OCI-LY7 (cell line): ENCODE measurements at regions of chr11 and their contacts with region 1.

Region 1: GRCh38 chr11:14566331-14567063 is 46.3 kb upstream of the PSMA1 start:
- DNase-seq: no peak
- H3K4me3 ChIP-seq: no peak overlapping the region
- H3K27ac ChIP-seq: no peak overlapping the region
- H3K4me1 ChIP-seq: no peaks in the 10 kb centered on the region
- CTCF ChIP-seq: no peak

Region 2: DNA sequence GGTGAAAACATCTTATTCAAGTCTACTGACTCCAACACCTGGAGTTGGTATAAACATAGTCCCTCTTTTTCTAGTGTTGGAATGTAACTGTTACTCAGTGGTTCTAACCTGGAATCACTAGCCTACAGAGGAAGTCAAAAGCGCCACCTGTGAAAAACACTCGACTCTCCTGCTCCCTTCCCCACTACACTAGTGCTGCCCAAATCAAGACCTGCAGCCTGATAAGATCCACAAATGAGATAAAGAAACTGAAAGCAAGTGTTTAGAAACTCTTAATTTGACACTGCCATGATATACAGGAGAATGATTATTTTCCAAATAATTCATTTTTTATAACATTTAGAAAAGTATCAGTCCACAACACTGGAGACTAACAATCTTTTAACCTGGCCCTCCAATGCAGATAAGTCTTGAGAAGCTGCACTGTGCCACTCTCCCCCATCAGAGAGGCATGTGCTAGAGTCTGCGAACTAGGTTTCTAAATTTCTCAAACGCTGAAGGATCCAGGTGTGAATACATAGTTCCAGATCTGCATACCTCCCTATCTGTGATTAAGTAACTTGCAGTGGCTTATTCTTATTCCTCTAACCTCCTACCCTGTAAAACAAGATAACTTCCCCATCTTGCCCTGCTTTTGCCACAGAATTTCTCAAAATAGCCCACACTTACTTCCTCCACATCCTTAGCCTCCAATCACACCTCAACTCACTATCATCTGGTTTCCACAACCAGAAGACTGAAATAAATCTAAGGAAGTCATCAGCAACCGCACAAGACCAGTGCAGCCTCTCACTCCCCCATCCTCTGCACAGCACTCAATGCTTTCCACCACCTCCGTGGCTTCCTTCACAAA is 295.6 kb before region 1 on chr11:
- CTCF ChIA-PET with region 1: no interaction called
- POLR2A ChIA-PET with region 1: no interaction called
- intact Hi-C with region 1: no loop called
- DNase-seq: no peak
- H3K4me3 ChIP-seq: no peak overlapping the region
- H3K27ac ChIP-seq: no peak overlapping the region
- H3K4me1 ChIP-seq: no peaks in the 10 kb centered on the region
- CTCF ChIP-seq: no peak

Region 3: GRCh38 chr11:14578541-14578956 is 12.1 kb after region 1 on chr11:
- CTCF ChIA-PET with region 1: no interaction called
- POLR2A ChIA-PET with region 1: interaction called, 13 read pairs
- intact Hi-C with region 1: no loop called
- DNase-seq: peak; percentile 80
- H3K4me3 ChIP-seq: peak overlapping the region; percentile 48
- H3K27ac ChIP-seq: peak overlapping the region; percentile 47
- H3K4me1 ChIP-seq: peaks cover 14% of the 10 kb centered on the region
- CTCF ChIP-seq: no peak

Region 4: GRCh38 chr11:14611939-14612338 is 45.4 kb after region 1 on chr11:
- CTCF ChIA-PET with region 1: no interaction called
- POLR2A ChIA-PET with region 1: no interaction called
- intact Hi-C with region 1: no loop called
- DNase-seq: no peak
- H3K4me3 ChIP-seq: no peak overlapping the region
- H3K27ac ChIP-seq: no peak overlapping the region
- H3K4me1 ChIP-seq: no peaks in the 10 kb centered on the region
- CTCF ChIP-seq: no peak